Activated B cell treated with CpG ODN at 0.5 μM for 24 hours (primary cell): ENCODE measurements at regions of chr2 and their contacts with region 1.

Region 1: GRCh38 chr2:47697000-47697601 is 85.8 kb upstream of the MSH6 start:
- DNase-seq: no peak
- ATAC-seq: peak; percentile 51
- H3K4me3 Mint-ChIP-seq: peak overlapping the region; percentile 67
- H3K27ac Mint-ChIP-seq: peak overlapping the region; percentile 87
- H3K4me1 Mint-ChIP-seq: peaks cover 67% of the 10 kb centered on the region
- H3K27me3 Mint-ChIP-seq: peaks cover 2% of the 10 kb centered on the region
- CTCF ChIP-seq: no peak

Region 2: GRCh38 chr2:47653902-47654789 is 43.0 kb before region 1 on chr2:
- CTCF ChIA-PET with region 1: no interaction called
- POLR2A ChIA-PET with region 1: interaction called, 11 read pairs
- intact Hi-C with region 1: no loop called
- DNase-seq: no peak
- ATAC-seq: no peak
- H3K4me3 Mint-ChIP-seq: peak overlapping the region; percentile 51
- H3K27ac Mint-ChIP-seq: peak overlapping the region; percentile 90
- H3K4me1 Mint-ChIP-seq: peaks cover 51% of the 10 kb centered on the region
- H3K27me3 Mint-ChIP-seq: no peaks in the 10 kb centered on the region
- CTCF ChIP-seq: no peak